ENCODE measurements at regions of chr11 and their contacts with region 1.

Region 1: DNA sequence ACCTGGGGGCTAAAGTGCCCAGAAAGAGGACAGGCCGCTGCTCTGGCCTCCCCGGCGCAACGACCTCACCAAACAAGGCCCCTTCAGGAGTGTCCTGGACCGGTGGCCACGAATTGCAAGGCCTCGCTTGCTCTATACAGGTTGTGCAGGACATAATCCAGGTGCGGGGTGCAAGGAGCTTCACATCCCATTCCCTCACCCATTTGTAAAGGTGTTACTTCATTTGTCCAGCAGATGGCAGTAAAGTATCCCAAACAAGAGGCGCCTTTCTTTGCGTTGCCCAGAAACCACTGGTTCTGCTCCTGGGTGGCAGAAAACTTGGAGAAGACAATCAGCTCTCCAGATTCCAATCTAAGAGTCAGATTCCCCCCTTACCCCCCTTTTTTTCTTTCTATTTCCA is 35.9 kb upstream of the PRDM11 start:
- DNase-seq: peak in 13 of 35 experiments; percentile 14 to 83 (median 26)
- ATAC-seq: peak; percentile 58 to 67 (median 63)
- H3K4me3 ChIP-seq: no peak overlapping the region
- H3K4me3 Mint-ChIP-seq: no peak overlapping the region
- H3K27ac ChIP-seq: no peak overlapping the region
- H3K27ac Mint-ChIP-seq: no peak overlapping the region
- H3K4me1 ChIP-seq: peaks cover 0 to 2% of the 10 kb centered on the region in 2 experiments
- H3K4me1 Mint-ChIP-seq: no peaks in the 10 kb centered on the region
- H3K27me3 ChIP-seq: peaks cover 0 to 39% of the 10 kb centered on the region in 2 experiments
- H3K27me3 Mint-ChIP-seq: peaks cover 48 to 51% of the 10 kb centered on the region in 2 donors

Region 2: GRCh38 chr11:44936525-44936924 is 174.0 kb before region 1 on chr11:
- CTCF ChIA-PET with region 1: interaction called, 135 to 179 read pairs
- POLR2A ChIA-PET with region 1: no interaction called
- DNase-seq: peak; percentile 40 to 90 (median 74)
- ATAC-seq: peak; percentile 83 to 88 (median 86)
- H3K4me3 ChIP-seq: no peak overlapping the region
- H3K4me3 Mint-ChIP-seq: no peak overlapping the region
- H3K27ac ChIP-seq: no peak overlapping the region
- H3K27ac Mint-ChIP-seq: no peak overlapping the region
- H3K4me1 ChIP-seq: peaks cover 0 to 7% of the 10 kb centered on the region in 2 experiments
- H3K4me1 Mint-ChIP-seq: peaks cover 0 to 16% (median 2%) of the 10 kb centered on the region in 3 donors
- H3K27me3 ChIP-seq: no peaks in the 10 kb centered on the region
- H3K27me3 Mint-ChIP-seq: no peaks in the 10 kb centered on the region

Region 3: GRCh38 chr11:45332276-45332934 is 221.8 kb after region 1 on chr11:
- CTCF ChIA-PET with region 1: interaction called, 11 to 15 read pairs
- POLR2A ChIA-PET with region 1: interaction called in 1 of 2 experiments, 3 read pairs
- DNase-seq: peak in 18 of 35 experiments; percentile 7 to 71 (median 29)
- ATAC-seq: peak in 3 of 4 experiments; percentile 32 to 60 (median 45)
- H3K4me3 ChIP-seq: no peak overlapping the region
- H3K4me3 Mint-ChIP-seq: no peak overlapping the region
- H3K27ac ChIP-seq: no peak overlapping the region
- H3K27ac Mint-ChIP-seq: peak overlapping the region in 1 of 2 donors; percentile 56
- H3K4me1 ChIP-seq: no peaks in the 10 kb centered on the region
- H3K4me1 Mint-ChIP-seq: no peaks in the 10 kb centered on the region
- H3K27me3 ChIP-seq: peaks cover 0 to 20% of the 10 kb centered on the region in 2 experiments
- H3K27me3 Mint-ChIP-seq: peaks cover 18% of the 10 kb centered on the region in 2 donors

Measured in T-cell (primary cell).